SK-N-SH (cell line): ENCODE measurements at regions of chr2 and their contacts with region 1.

Region 1: GRCh38 chr2:174465327-174465726 is 21.5 kb downstream of the GPR155 start:
- DNase-seq: no peak
- H3K4me3 ChIP-seq: no peak overlapping the region
- H3K27ac ChIP-seq: no peak overlapping the region
- H3K4me1 ChIP-seq: peaks cover 0 to 2% of the 10 kb centered on the region in 2 experiments; a peak in 2 of 4 replicates
- H3K27me3 ChIP-seq: no peaks in the 10 kb centered on the region
- CTCF ChIP-seq: no peak
- EP300 ChIP-seq: no peak
- RAD21 ChIP-seq: no peak; the same call in 1 of the 2 replicates

Region 2: DNA sequence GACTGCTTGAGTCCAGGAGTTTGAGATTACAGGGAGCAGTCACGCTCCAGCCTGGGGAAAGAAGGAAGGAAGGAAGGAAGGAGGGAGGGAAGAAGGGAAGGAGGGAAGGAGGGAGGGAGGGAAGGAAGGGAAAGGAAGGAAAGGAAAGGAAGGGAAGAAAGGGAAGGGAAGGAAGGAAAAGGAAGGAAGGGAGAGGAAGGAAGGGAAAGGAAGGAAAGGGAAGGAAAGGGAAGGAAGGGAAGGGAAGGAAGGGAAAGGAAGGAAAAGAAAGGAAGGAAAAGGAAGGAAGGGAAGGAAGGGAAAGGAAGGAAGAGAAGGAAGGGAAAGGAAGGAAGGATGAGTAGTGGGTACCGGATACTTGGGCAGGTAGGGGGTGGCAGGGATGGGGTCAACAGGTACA is 10.8 kb before region 1 on chr2:
- CTCF ChIA-PET with region 1: interaction called, 14 read pairs
- POLR2A ChIA-PET with region 1: interaction called, 3 read pairs
- DNase-seq: no peak
- H3K4me3 ChIP-seq: no peak overlapping the region
- H3K27ac ChIP-seq: no peak overlapping the region
- H3K4me1 ChIP-seq: peaks cover 0 to 2% of the 10 kb centered on the region in 2 experiments; a peak in 2 of 4 replicates
- H3K27me3 ChIP-seq: no peaks in the 10 kb centered on the region
- CTCF ChIP-seq: no peak
- EP300 ChIP-seq: no peak
- RAD21 ChIP-seq: no peak

Region 3: DNA sequence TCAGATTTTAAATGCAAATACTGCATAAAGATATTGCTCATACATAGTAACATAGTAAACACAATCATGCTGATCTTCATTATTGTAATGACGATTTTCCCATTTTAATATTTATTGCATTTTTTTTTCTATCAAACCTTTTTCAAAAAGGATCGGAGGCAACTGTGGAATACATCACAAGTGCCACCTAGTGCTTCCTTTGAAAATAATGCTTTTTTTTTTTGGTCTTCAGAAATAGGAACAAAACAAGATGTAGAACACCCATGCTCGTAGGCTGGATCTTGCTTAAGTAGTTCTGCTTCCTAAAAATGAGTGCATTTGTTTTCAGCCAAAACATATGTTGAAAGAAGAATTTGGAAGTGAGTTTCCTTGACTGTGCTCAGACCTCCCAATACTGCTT is 57.2 kb after region 1 on chr2:
- CTCF ChIA-PET with region 1: interaction called, 64 read pairs
- POLR2A ChIA-PET with region 1: no interaction called
- DNase-seq: peak; percentile 34
- H3K4me3 ChIP-seq: no peak overlapping the region
- H3K27ac ChIP-seq: no peak overlapping the region
- H3K4me1 ChIP-seq: no peaks in the 10 kb centered on the region
- H3K27me3 ChIP-seq: no peaks in the 10 kb centered on the region
- CTCF ChIP-seq: peak; percentile 53
- EP300 ChIP-seq: no peak
- RAD21 ChIP-seq: peak; percentile 70

Region 4: GRCh38 chr2:174553811-174554493 is 88.6 kb after region 1 on chr2:
- CTCF ChIA-PET with region 1: interaction called, 107 read pairs
- POLR2A ChIA-PET with region 1: no interaction called
- DNase-seq: no peak
- H3K4me3 ChIP-seq: no peak overlapping the region
- H3K27ac ChIP-seq: no peak overlapping the region
- H3K4me1 ChIP-seq: no peaks in the 10 kb centered on the region
- H3K27me3 ChIP-seq: no peaks in the 10 kb centered on the region
- CTCF ChIP-seq: no peak
- EP300 ChIP-seq: no peak
- RAD21 ChIP-seq: no peak

Region 5: GRCh38 chr2:174603280-174603679 is 138.0 kb after region 1 on chr2:
- CTCF ChIA-PET with region 1: interaction called, 13 read pairs
- POLR2A ChIA-PET with region 1: no interaction called
- DNase-seq: peak; percentile 36
- H3K4me3 ChIP-seq: no peak overlapping the region
- H3K27ac ChIP-seq: peak overlapping the region in 1 of 2 experiments; percentile 83; a peak in 2 of 4 replicates
- H3K4me1 ChIP-seq: peaks cover 12 to 44% of the 10 kb centered on the region in 2 experiments
- H3K27me3 ChIP-seq: no peaks in the 10 kb centered on the region
- CTCF ChIP-seq: peak; percentile 55
- EP300 ChIP-seq: no peak
- RAD21 ChIP-seq: peak; percentile 67

Region 6: GRCh38 chr2:174697255-174697654 is 231.9 kb after region 1 on chr2:
- CTCF ChIA-PET with region 1: interaction called, 59 read pairs
- POLR2A ChIA-PET with region 1: no interaction called
- DNase-seq: peak; percentile 80
- H3K4me3 ChIP-seq: no peak overlapping the region; a peak in 1 of 4 replicates
- H3K27ac ChIP-seq: no peak overlapping the region
- H3K4me1 ChIP-seq: peaks cover 0 to 5% of the 10 kb centered on the region in 2 experiments; a peak in 1 of 4 replicates
- H3K27me3 ChIP-seq: no peaks in the 10 kb centered on the region
- CTCF ChIP-seq: peak; percentile 89
- EP300 ChIP-seq: no peak
- RAD21 ChIP-seq: peak; percentile 78